Activated CD4-positive, alpha-beta memory T cell treated with anti-CD3 and anti-CD28 coated beads, Interleukin-2, amount 10 ng/mL, durations not matched to agents 7 days and 5 days (primary cell): ENCODE measurements at regions of chr17 and their contacts with region 1.

Region 1: DNA sequence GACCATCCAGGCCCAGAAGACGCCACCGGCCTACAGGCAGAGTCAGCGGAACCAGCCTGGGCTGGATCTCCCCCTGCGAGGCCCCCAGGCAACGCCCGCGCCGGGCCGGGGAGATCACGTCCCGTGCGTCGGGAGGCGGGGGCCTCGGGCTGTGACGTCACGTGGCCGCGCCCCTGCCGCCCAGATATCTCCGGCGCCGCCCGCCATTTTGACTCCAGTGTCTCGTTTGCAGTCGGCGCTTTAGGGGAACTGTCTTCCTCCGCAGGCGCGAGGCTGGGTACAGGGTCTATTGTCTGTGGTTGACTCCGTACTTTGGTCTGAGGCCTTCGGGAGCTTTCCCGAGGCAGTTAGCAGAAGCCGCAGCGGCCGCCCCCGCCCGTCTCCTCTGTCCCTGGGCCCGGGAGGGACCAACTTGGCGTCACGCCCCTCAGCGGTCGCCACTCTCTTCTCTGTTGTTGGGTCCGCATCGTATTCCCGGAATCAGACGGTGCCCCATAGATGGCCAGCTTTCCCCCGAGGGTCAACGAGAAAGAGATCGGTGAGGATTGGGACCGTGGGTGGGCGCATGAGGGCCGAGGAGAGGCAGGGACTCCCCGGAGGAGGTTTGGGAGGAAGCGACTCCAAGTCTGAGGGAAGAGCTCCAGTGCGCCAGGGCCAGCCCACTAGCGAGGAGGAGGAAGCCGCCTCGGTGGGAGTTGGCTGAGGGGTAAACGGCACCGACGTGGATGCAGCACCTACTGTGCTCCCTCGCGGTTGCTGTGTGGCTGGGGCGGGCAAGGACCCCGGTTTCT is at the start of gene WSB1:
- DNase-seq: peak; percentile 93
- H3K4me3 Mint-ChIP-seq: peak within 1 kb of the TSS; percentile 99
- H3K27ac Mint-ChIP-seq: peak within 1 kb of the TSS; percentile 98
- H3K4me1 Mint-ChIP-seq: peaks cover 36% of the 10 kb centered on the region
- H3K27me3 Mint-ChIP-seq: no peaks in the 10 kb centered on the region
- total RNA-seq, gene WSB1: 143 to 155 TPM

Region 2: GRCh38 chr17:27091043-27091497 is 203.0 kb before region 1 on chr17:
- CTCF ChIA-PET with region 1: no interaction called
- POLR2A ChIA-PET with region 1: no interaction called
- DNase-seq: no peak
- H3K4me3 Mint-ChIP-seq: no peak overlapping the region
- H3K27ac Mint-ChIP-seq: no peak overlapping the region
- H3K4me1 Mint-ChIP-seq: no peaks in the 10 kb centered on the region
- H3K27me3 Mint-ChIP-seq: peaks cover 2% of the 10 kb centered on the region

Region 3: DNA sequence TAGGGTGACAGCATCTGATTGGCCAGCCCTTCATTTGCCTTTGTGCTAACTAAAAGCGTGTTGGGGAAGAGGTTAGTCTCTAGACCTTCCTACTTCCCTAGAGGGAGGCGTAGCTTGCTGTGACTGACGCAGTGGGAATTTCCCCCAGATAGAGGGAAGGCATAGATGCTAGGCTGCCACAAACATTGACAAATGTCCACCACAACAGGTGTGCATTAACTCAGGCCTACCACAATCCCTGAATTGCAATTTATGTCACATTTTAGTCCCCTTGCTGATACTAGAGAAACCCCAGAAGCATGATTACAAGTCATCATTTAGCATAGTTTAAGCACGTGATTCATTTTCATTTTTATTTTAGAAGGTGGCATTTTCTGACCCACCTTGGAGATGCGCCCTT is 76.5 kb before region 1 on chr17:
- CTCF ChIA-PET with region 1: no interaction called
- POLR2A ChIA-PET with region 1: interaction called, 16 read pairs
- DNase-seq: no peak
- H3K4me3 Mint-ChIP-seq: no peak overlapping the region
- H3K27ac Mint-ChIP-seq: peak overlapping the region; percentile 75
- H3K4me1 Mint-ChIP-seq: peaks cover 29% of the 10 kb centered on the region
- H3K27me3 Mint-ChIP-seq: peaks cover 2% of the 10 kb centered on the region

Region 4: DNA sequence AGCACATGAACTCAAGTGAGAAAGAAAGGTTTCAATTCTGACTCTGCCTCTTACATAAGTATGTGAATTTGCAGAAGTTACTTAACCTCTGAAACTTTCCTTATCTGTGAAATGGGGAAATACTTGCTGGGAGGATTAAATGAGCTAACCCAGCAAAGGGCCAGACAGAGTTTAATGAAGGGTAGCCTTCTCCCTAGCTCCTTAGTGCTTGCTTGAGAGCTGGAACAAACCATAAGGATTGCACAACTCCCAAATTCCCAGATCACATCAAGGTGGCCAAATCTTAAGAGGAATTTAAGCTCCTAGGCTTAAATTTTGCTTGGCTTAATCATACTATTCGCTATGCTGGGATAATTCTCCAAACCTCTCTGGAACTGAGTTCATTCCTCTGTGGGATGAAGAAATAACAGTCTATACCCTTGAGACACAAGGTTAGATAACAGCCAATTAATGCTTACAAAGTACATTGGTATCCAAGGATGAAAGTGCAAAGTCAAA is 12.0 kb before region 1 on chr17:
- CTCF ChIA-PET with region 1: interaction called, 3 read pairs
- POLR2A ChIA-PET with region 1: interaction called, 36 read pairs
- DNase-seq: no peak
- H3K4me3 Mint-ChIP-seq: no peak overlapping the region
- H3K27ac Mint-ChIP-seq: no peak overlapping the region
- H3K4me1 Mint-ChIP-seq: no peaks in the 10 kb centered on the region
- H3K27me3 Mint-ChIP-seq: peaks cover 3% of the 10 kb centered on the region

Region 5: GRCh38 chr17:27332485-27333409 is 38.7 kb after region 1 on chr17:
- CTCF ChIA-PET with region 1: interaction called, 10 read pairs
- POLR2A ChIA-PET with region 1: interaction called, 38 read pairs
- DNase-seq: peak; percentile 92
- H3K4me3 Mint-ChIP-seq: peak overlapping the region; percentile 65
- H3K27ac Mint-ChIP-seq: peak overlapping the region; percentile 35
- H3K4me1 Mint-ChIP-seq: peaks cover 23% of the 10 kb centered on the region
- H3K27me3 Mint-ChIP-seq: no peaks in the 10 kb centered on the region

Region 6: GRCh38 chr17:27367121-27367991 is 73.3 kb after region 1 on chr17:
- CTCF ChIA-PET with region 1: no interaction called
- POLR2A ChIA-PET with region 1: no interaction called
- DNase-seq: no peak
- H3K4me3 Mint-ChIP-seq: no peak overlapping the region
- H3K27ac Mint-ChIP-seq: no peak overlapping the region
- H3K4me1 Mint-ChIP-seq: no peaks in the 10 kb centered on the region
- H3K27me3 Mint-ChIP-seq: peaks cover 4% of the 10 kb centered on the region

Region 7: DNA sequence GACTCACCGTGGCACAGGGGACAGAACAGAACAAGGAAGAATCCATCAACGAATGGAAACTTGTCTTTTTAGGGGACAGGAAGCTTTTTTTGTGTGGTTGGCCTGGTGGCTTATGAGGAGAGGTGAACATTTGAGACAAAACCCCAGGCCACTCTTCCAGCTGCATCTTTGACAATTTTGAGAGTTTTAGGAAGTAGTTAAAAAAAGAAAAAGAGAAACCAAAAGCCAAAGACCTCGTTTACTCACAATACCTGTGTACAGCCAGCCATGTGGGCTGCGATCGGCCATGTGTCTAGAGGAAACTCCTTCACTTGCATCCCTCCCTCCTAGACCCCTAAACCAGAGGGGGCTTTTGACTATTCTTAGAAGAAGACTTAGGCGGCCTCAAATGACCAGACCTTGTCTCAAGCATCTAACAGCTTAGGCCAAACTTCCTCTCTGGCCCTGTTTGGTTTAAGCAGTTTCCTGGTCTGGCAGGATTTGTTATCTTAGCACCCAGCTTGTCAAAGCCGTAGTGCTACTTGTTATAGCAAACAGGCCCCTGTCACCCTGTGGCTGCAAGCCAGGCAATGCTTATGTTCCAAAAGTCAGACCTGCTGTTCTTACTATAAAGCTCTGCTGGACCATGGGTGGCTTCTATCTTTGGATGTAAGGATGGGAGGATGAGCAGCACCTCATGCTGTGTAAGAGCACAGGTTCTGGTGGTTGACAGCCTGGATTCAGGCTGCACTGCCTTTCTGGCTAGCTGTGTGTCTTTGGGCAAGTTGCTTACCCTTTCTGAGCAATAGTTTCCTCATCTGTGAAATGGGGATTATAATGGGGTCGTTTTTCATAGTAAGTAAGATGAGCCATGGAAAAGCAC is 179.9 kb after region 1 on chr17:
- CTCF ChIA-PET with region 1: no interaction called
- POLR2A ChIA-PET with region 1: interaction called, 25 read pairs
- DNase-seq: peak; percentile 83
- H3K4me3 Mint-ChIP-seq: peak overlapping the region; percentile 61
- H3K27ac Mint-ChIP-seq: peak overlapping the region; percentile 98
- H3K4me1 Mint-ChIP-seq: peaks cover 87% of the 10 kb centered on the region
- H3K27me3 Mint-ChIP-seq: no peaks in the 10 kb centered on the region

Region 8: GRCh38 chr17:27805520-27806146 is 511.5 kb after region 1 on chr17:
- CTCF ChIA-PET with region 1: no interaction called
- POLR2A ChIA-PET with region 1: interaction called, 14 read pairs
- DNase-seq: peak; percentile 87
- H3K4me3 Mint-ChIP-seq: peak overlapping the region; percentile 44
- H3K27ac Mint-ChIP-seq: peak overlapping the region; percentile 84
- H3K4me1 Mint-ChIP-seq: peaks cover 46% of the 10 kb centered on the region
- H3K27me3 Mint-ChIP-seq: no peaks in the 10 kb centered on the region